Breast epithelium (tissue), 4 donors: ENCODE measurements at regions of chr11 and their contacts with region 1.

Region 1: DNA sequence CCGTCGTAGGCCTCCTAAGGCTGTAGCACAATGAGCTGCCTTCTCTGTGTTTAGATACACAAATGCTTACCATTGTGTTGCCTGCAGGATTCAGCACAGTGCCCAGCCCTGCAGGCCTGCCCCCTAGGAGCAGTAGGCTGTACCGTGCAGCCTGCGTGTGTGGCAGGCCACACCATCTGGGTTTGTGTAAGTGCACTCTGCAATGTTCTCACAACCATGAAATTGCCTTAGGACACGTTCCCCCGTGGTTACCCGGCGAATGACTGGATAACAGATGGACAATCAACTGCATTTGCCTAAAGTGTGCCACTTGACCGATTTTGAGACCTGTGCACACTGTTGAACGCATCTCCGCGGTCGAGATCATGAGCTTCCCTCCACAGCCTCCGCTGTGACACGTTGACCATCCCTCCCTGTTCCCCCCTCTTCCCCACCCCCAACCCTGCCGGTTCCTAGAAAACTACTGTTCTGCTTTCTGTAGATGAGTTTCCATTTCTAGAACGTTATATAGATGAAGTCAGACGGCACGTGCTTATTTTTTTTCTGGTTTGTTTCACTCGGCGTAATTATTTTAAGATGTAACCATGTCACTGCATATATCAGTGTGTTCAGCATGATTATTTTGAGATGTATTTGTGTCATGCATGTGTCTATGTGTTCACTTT is 22.2 kb upstream of the CTSD start:
- DNase-seq: no peak
- H3K4me3 ChIP-seq: no peak overlapping the region
- H3K27ac ChIP-seq: no peak overlapping the region
- H3K4me1 ChIP-seq: no peaks in the 10 kb centered on the region
- H3K27me3 ChIP-seq: no peaks in the 10 kb centered on the region
- CTCF ChIP-seq: no peak
- POLR2A ChIP-seq: no peak

Region 2: GRCh38 chr11:2092956-2093412 is 307.1 kb after region 1 on chr11:
- intact Hi-C with region 1: no loop called
- DNase-seq: peak; percentile 84 to 96
- H3K4me3 ChIP-seq: no peak overlapping the region
- H3K27ac ChIP-seq: peak overlapping the region in 1 of 2 donors; percentile 68
- H3K4me1 ChIP-seq: peaks cover 4 to 6% of the 10 kb centered on the region in 2 donors
- H3K27me3 ChIP-seq: peaks cover 0 to 57% of the 10 kb centered on the region in 2 donors
- CTCF ChIP-seq: no peak
- POLR2A ChIP-seq: no peak

Region 3: GRCh38 chr11:2759228-2760195 is 973.6 kb after region 1 on chr11:
- intact Hi-C with region 1: loop called (anchors 5 kb)
- DNase-seq: peak in 1 of 2 donors; percentile 46
- H3K4me3 ChIP-seq: no peak overlapping the region
- H3K27ac ChIP-seq: no peak overlapping the region
- H3K4me1 ChIP-seq: no peaks in the 10 kb centered on the region
- H3K27me3 ChIP-seq: no peaks in the 10 kb centered on the region
- CTCF ChIP-seq: no peak
- POLR2A ChIP-seq: no peak